ENCODE measurements at regions of chr10 and their contacts with region 1.

Region 1: GRCh38 chr10:17023386-17024298 is 106.0 kb downstream of the CUBN start:
- DNase-seq: peak; percentile 94
- ATAC-seq: peak; percentile 60
- H3K4me3 Mint-ChIP-seq: peak overlapping the region; percentile 50
- H3K27ac Mint-ChIP-seq: peak overlapping the region; percentile 97
- H3K4me1 Mint-ChIP-seq: peaks cover 62% of the 10 kb centered on the region
- H3K27me3 Mint-ChIP-seq: no peaks in the 10 kb centered on the region
- CTCF ChIP-seq: no peak

Region 2: DNA sequence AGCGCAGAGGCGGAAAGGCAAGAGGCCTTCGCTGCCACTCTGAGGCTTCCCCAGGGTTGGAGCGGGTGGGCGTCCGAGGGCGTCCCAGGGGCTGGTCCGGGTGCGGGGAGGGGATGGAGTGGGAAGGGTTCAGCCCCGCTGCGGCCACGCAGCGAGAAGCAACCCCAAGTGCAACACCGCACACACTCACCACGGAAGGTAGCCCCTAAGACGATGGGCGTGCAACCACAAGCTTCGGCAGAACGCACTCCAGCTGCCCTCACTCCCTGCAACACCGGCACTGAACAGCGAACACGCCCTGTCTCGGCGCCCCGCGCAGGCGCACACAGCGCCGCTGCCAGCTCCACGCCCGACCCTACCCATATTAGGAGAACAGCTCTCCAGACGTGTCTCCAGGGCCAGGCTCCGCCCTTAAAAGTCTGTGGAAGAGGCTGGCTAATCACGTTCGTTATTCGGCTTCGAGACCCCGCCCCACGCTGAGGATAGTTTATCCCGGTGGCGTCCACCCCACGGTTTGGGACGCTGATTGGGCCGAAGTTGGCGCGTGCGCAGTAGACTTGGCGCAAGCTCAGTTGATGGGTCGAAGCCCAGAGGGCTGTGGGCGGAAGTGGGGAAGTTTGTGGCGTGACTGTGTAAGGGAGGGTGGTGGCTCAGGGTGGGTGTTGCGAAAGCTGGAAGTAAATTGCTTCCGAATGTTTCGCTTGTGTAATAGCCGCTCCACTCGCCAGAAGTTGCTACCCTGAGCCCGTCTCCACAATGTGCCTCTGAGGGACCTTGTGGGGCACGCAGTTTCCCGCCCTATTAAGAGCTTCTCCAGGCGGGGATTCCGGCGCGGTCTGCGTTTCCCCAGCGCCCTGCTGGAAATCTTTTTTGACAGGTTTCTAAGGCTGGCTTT is 206.3 kb before region 1 on chr10 and contains the start of gene RSU1:
- CTCF ChIA-PET with region 1: no interaction called
- POLR2A ChIA-PET with region 1: no interaction called
- intact Hi-C with region 1: loop called (anchors 2 kb)
- DNase-seq: peak; percentile 100
- ATAC-seq: peak; percentile 98
- H3K4me3 Mint-ChIP-seq: peak within 1 kb of the TSS; percentile 85
- H3K27ac Mint-ChIP-seq: peak within 1 kb of the TSS; percentile 92
- H3K4me1 Mint-ChIP-seq: peaks cover 26% of the 10 kb centered on the region
- H3K27me3 Mint-ChIP-seq: no peaks in the 10 kb centered on the region
- CTCF ChIP-seq: no peak
- total RNA-seq, gene RSU1: 42.4 to 47.5 TPM

Region 3: DNA sequence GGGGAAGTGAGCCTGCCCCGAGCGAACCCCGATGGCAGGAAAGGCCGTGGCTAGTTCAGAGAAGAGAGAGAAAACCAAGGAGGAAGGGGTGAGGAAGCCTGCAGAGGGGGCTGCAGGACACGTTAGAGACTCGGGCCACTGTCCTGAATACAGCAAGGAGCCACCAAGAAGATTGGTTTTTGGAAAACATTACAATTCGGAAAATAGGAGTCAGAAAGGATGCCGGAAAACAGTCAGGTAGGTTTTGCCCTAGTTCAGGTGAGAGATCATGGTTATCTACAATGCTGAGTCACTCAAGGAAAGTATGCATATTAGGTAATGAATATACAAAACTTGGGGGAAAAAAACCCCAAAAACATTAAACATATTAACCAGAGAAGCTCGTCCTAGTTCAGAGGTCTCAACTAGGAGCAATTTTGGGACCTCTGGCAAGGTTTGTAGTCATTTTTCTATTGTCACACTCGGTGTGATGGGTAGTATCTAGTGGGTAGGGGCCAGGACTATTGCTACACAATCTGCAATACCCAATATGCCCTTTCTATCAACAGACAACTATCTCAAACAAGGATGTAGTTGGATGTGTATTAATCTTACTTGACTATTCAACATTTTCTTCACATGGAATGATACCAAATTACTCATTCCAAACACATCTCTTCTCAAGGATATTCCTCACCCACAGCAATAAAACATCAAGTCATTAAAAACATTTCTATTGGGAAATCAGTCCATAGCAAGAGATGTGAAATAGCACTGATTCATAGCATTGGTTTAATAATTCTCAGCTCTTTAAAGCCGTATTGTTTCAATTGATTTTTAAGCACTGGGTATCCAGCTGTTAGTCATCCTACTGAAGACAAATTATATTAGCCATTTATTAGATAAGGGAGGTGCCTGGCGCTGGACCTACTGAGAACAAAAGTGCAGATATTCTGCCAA is 132.0 kb before region 1 on chr10:
- CTCF ChIA-PET with region 1: no interaction called
- POLR2A ChIA-PET with region 1: interaction called, 6 read pairs
- intact Hi-C with region 1: loop called (anchors 2 kb)
- DNase-seq: peak; percentile 70
- ATAC-seq: peak; percentile 89
- H3K4me3 Mint-ChIP-seq: peak overlapping the region; percentile 54
- H3K27ac Mint-ChIP-seq: peak overlapping the region; percentile 48
- H3K4me1 Mint-ChIP-seq: peaks cover 10% of the 10 kb centered on the region
- H3K27me3 Mint-ChIP-seq: no peaks in the 10 kb centered on the region
- CTCF ChIP-seq: peak; percentile 36

Region 4: GRCh38 chr10:17001961-17002749 is 21.5 kb before region 1 on chr10:
- CTCF ChIA-PET with region 1: interaction called, 9 read pairs
- POLR2A ChIA-PET with region 1: interaction called, 12 read pairs
- intact Hi-C with region 1: loop called (anchors 1 kb)
- DNase-seq: peak; percentile 47
- ATAC-seq: peak; percentile 57
- H3K4me3 Mint-ChIP-seq: peak overlapping the region; percentile 33
- H3K27ac Mint-ChIP-seq: peak overlapping the region; percentile 93
- H3K4me1 Mint-ChIP-seq: peaks cover 52% of the 10 kb centered on the region
- H3K27me3 Mint-ChIP-seq: peaks cover 4% of the 10 kb centered on the region
- CTCF ChIP-seq: no peak